Mammary epithelial cell (primary cell): ENCODE measurements at regions of chr2 and their contacts with region 1.

Region 1: DNA sequence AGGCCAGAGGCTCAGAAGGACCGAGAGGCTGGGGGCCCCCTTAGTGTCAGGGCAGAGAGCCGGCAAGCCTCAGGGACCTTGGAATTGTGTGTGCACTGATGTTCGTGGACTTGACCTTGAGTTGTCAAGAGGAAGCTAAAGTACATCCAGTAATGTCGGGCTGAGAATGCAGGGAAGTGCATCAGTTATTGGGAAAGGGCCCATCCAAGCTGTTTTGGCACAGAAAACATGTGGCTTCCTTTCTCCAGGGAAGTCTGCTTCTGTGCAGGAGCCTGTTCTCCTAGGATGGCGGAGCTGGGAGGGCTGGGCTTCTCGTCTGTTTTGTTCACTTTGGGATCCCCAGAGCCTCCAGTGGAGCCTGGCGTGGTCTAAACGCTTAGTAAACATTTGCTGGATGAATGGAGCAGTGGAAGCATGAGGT is 23.7 kb downstream of the ATOH8 start:
- DNase-seq: no peak
- H3K4me3 ChIP-seq: no peak overlapping the region
- H3K27ac ChIP-seq: no peak overlapping the region
- H3K4me1 ChIP-seq: peaks cover 6% of the 10 kb centered on the region
- H3K27me3 ChIP-seq: peaks cover 4% of the 10 kb centered on the region
- CTCF ChIP-seq: no peak

Region 2: DNA sequence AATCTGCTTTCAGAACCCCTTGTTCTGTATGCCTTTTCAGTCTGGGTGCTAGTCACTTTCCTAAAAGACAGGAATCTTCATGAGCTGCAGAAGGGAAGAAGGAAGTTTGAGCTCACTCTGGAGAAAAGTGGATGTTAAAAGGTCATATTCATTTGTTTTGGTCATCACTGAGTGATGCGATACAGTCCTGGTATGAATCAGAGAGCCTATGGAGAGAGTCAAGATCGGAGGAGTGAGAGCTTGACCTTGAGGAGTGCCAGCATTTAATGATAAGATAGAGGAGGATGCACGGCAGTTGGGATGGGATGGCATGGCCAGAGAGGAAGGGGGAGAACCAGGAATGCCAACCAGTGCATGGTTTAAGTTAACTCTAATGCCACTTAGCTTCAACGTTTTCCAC is 141.8 kb before region 1 on chr2:
- CTCF ChIA-PET with region 1: no interaction called
- dilution Hi-C with region 1: no loop called
- in situ Hi-C with region 1: no loop called
- intact Hi-C with region 1: no loop called
- DNase-seq: no peak
- H3K4me3 ChIP-seq: no peak overlapping the region
- H3K27ac ChIP-seq: no peak overlapping the region
- H3K4me1 ChIP-seq: no peaks in the 10 kb centered on the region
- H3K27me3 ChIP-seq: no peaks in the 10 kb centered on the region
- CTCF ChIP-seq: no peak

Region 3: DNA sequence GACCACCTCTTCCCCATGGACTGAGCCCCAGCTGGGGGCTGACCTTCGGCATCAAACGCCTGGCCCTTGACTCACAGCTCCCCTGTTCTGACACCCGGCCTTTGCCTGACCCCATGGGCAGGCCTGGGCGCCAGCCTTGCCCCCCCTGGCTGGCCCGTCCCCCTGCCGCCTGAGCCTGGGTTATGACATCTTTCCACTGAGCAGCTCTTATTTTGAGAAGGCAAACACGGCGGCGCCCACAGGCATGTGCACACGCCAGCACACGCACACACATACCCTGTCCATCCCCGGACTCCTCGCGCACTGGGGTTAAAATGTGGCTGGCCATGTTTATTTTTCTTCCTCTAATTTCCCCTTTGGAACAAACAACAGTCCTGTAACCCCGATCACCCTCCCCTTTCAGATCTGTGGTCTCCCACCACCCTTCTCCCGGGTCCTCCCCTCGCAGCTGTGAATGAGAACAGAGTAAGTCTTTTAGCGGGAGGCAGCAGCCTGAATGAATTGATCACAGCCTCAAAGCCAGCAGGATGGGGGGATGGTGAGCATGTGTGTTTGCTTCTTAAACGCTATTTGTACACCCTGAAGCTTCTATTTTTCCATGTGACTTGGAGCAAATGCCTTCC is 35.5 kb before region 1 on chr2:
- CTCF ChIA-PET with region 1: no interaction called
- dilution Hi-C with region 1: loop called (anchors 5 kb)
- in situ Hi-C with region 1: no loop called
- intact Hi-C with region 1: no loop called
- DNase-seq: peak; percentile 55
- H3K4me3 ChIP-seq: no peak overlapping the region
- H3K27ac ChIP-seq: peak overlapping the region; percentile 51
- H3K4me1 ChIP-seq: peaks cover 22% of the 10 kb centered on the region
- H3K27me3 ChIP-seq: peaks cover 13% of the 10 kb centered on the region
- CTCF ChIP-seq: no peak